Posterior vena cava (tissue), 2 donors: ENCODE measurements at regions of chr9 and their contacts with region 1.

Region 1: GRCh38 chr9:116933251-116933650 is 246.1 kb downstream of the TRIM32 start:
- DNase-seq: no peak

Region 2: GRCh38 chr9:117448066-117448714 is 514.9 kb after region 1 on chr9:
- intact Hi-C with region 1: loop called in 1 of 2 experiments (anchors 5 kb)
- DNase-seq: no peak

Region 3: GRCh38 chr9:117763314-117763713 is 830.1 kb after region 1 on chr9:
- intact Hi-C with region 1: no loop called
- DNase-seq: no peak